Common myeloid progenitor, CD34-positive (primary cell): ENCODE measurements at regions of chr2 and their contacts with region 1.

Region 1: GRCh38 chr2:233418761-233419625 is 64.7 kb downstream of the DGKD start:
- DNase-seq: peak; percentile 25 to 85 (median 80)
- H3K4me3 ChIP-seq: peak overlapping the region in 6 of 7 experiments; percentile 4 to 52 (median 37)
- H3K27ac ChIP-seq: no peak overlapping the region
- H3K4me1 ChIP-seq: peaks cover 4 to 26% (median 21%) of the 10 kb centered on the region in 4 experiments
- H3K27me3 ChIP-seq: no peaks in the 10 kb centered on the region

Region 2: GRCh38 chr2:232117413-232117812 is 1301.6 kb before region 1 on chr2:
- CTCF ChIA-PET with region 1: no interaction called
- POLR2A ChIA-PET with region 1: no interaction called
- DNase-seq: peak in 2 of 3 donors; percentile 19 to 27
- H3K4me3 ChIP-seq: no peak overlapping the region
- H3K27ac ChIP-seq: no peak overlapping the region
- H3K4me1 ChIP-seq: no peaks in the 10 kb centered on the region
- H3K27me3 ChIP-seq: no peaks in the 10 kb centered on the region

Region 3: DNA sequence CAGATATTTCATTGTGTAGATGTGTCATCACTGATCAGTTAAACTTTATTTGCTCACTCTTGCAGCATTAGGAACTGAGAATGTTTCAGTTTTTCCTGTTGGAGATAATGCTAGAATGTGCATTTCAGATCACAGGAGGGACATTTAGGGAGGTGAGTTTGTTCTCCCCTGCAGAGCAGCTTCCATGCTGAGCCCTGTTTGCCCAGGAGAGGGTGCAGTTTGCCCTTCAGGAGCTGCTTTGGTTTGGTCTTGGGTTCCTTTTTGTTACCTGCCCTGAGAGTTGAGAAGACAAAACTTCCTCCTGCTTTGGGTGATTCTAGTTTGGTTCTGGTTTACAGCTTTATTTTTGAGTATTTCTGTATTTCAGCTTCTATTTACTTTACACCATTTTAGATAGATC is 14.8 kb before region 1 on chr2:
- CTCF ChIA-PET with region 1: interaction called, 78 read pairs
- POLR2A ChIA-PET with region 1: interaction called, 3 read pairs
- DNase-seq: peak; percentile 58 to 74 (median 69)
- H3K4me3 ChIP-seq: no peak overlapping the region
- H3K27ac ChIP-seq: no peak overlapping the region
- H3K4me1 ChIP-seq: peaks cover 0 to 25% (median 18%) of the 10 kb centered on the region in 4 experiments
- H3K27me3 ChIP-seq: no peaks in the 10 kb centered on the region

Region 4: GRCh38 chr2:233434666-233435330 is 15.8 kb after region 1 on chr2:
- CTCF ChIA-PET with region 1: interaction called, 11 read pairs
- POLR2A ChIA-PET with region 1: no interaction called
- DNase-seq: no peak
- H3K4me3 ChIP-seq: no peak overlapping the region
- H3K27ac ChIP-seq: no peak overlapping the region
- H3K4me1 ChIP-seq: peaks cover 0 to 7% (median 5%) of the 10 kb centered on the region in 4 experiments
- H3K27me3 ChIP-seq: no peaks in the 10 kb centered on the region

Region 5: GRCh38 chr2:233501198-233502076 is 82.4 kb after region 1 on chr2:
- CTCF ChIA-PET with region 1: no interaction called
- POLR2A ChIA-PET with region 1: no interaction called
- DNase-seq: no peak
- H3K4me3 ChIP-seq: no peak overlapping the region
- H3K27ac ChIP-seq: no peak overlapping the region
- H3K4me1 ChIP-seq: peaks cover 0 to 20% (median 6%) of the 10 kb centered on the region in 4 experiments
- H3K27me3 ChIP-seq: no peaks in the 10 kb centered on the region